GM10248 (cell line): ENCODE measurements at regions of chr18 and their contacts with region 1.

Region 1: DNA sequence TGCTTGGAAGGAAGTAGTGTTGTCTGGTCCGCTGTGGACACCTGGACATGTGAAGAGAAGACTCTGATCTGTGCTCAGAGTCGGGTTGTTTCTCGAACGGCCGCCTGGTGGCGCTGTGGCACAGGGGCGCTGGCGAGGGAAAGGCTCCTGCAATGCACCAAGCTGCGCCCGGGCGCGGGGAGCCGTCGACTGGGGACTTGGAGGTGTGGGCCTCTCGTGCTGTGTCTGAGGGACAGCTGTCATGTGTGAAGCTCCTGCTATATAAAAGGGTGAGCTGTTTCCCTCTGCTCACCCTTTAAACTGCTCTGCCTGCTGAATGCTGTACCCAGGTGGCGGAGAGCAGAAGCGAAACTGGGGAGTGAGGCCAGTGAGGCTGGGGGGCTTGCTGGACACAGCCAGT is 44.0 kb downstream of the GNAL start:
- DNase-seq: peak; percentile 82
- CTCF ChIP-seq: peak; percentile 88

Region 2: DNA sequence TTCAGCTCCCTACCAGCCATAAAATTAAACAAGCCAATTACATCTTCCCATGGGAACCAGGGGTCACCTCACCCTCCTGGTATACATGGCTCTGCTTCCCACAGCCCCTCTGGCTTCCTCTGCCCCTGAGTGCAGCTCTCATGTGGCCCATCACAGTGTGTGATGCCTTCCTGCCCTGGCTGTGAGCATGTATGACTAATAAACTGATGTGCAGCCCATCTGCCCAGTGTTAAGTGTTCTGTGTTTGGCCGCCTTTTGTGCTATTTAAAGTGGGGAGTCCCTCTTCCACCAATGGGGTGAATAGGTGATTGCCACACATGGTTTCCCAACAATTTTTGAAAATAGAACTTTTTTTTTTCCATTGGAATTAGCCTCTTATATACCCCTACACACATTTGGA is 496.0 kb before region 1 on chr18:
- CTCF ChIA-PET with region 1: no interaction called
- POLR2A ChIA-PET with region 1: no interaction called
- DNase-seq: no peak
- CTCF ChIP-seq: no peak

Region 3: DNA sequence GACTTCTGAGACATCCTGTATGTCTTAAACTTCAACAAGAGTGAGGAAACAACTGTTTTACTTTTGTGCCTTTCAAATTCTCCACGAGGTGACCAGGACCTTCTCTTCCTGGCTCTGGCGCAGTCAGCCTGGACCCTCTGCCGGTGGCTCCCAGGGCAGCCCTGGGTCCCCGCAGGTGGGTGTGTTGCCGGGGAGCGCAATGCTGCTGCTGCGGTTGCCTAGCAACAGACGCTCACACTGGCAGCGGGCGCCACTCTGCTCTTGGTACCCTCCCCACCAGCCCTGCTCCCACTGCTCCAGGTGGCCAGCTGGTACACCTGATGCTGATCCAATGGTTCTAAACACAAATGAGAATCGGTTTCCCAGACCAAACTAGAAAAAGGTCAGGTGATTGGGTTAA is 14.7 kb after region 1 on chr18:
- CTCF ChIA-PET with region 1: interaction called, 29 read pairs
- POLR2A ChIA-PET with region 1: no interaction called
- DNase-seq: no peak
- CTCF ChIP-seq: no peak

Region 4: DNA sequence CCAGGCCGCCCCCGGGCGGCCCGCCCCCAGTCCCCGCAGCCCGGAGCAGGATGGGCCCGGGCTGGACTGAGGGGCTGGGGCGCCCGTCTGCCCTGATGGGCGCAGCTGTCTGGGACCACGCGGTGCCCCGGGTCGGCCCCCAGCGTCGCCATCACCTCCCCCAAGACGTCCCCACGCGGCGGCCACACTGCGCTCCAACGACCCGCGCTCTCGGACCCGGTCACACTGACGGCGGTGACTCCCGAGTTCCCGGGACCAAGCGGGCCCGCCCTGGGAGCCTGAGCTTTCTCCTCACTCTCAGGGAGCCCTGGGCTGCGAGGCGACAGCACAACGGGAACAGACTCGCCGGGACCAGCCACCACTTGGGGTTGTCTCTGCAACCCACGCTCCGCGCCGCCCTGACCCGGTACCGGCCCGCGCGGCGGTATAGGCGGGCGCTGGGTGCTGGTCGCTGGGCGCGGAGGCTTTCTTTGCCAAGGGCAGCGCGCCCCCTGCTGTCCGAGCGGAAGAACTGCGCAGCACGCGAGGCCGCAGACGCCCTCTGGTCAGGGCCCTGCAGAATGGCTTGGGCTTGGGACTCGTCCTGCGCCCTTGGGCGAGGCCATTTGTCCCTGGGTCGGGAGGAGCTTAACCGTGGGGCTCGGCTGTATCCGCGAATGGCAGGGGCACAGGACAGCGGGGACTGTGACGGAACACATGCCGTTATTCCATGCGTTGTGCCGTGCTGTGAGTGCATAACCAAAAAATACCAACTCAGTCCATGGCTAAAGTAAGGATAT is 305.8 kb after region 1 on chr18:
- CTCF ChIA-PET with region 1: interaction called, 19 read pairs
- POLR2A ChIA-PET with region 1: no interaction called
- DNase-seq: peak; percentile 86
- CTCF ChIP-seq: peak; percentile 99

Region 5: DNA sequence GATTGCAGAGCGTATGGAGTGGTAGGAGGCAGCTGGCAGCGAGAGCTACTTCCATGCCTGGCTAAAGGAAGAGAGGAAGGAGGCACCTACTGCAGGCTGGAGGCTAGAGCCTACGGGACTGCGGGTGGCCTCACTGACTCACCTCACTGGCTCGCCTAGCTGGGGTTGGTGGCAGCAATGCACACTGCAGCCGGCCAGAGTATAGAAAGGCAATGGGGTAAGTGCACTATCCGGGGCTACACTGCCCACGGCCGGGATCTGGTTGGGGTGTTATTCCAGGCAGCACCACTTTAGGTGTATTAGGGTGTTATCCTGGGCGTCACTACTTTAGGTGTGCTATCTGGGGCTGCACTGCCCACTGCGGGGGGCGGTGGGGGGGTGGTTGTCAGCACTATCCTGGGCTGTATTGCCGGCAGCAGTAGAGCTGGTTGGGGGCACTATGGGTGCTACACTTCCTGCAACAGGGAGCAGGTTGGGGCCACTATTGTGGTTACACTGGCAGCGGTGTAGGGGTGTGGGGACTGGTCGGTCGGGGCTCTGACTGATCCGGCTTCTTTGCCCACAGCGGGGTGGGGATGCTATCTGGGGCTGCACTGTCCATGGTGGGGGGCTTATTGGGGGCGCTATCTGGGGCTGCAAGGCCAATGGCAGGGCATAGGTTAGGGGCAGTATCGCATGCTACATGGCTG is 327.3 kb after region 1 on chr18:
- CTCF ChIA-PET with region 1: no interaction called
- POLR2A ChIA-PET with region 1: no interaction called
- DNase-seq: no peak
- CTCF ChIP-seq: no peak